PC-3 (cell line): ENCODE measurements at regions of chr1 and their contacts with region 1.

Region 1: DNA sequence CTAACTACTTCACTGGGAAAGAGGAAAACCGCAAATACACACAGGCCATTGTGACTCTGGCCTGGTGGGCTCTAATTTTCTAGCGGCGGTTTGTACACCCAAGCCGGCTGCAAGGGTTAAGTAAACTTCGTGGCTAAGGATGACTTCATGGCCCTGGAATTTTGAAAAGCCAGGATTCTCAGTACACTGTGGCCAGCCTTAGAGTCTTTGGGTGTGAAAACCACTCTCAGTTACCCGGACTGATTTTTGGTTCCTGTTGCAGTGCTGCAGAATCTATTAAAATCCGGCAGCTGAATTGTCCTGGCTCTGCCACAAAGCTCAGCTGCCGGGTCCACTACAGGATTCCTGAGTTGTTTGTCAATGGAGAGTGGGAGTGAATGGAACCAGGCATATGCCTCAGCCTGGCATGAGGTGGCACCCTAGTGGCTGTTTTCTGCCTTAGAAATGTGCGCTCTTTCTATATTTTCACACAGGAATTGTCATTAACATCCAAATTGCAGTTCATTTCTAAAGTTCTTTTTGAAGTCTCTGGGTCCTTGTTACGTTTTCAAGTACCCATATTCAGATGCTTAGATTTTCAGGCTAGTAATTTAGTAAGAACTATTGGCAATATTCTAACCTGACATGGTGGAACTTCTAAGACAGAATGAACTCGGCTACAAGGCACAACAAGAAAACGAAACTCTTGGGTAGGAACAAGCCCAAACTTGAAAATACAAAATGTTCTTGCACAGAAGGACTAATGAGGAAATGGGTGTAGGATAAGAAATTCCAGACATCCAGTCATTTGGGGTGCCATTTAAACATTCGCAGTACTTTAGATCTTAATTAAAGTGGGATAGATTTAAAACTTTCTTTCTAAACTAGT is 255.9 kb downstream of the NFIA start:
- DNase-seq: peak; percentile 96
- ATAC-seq: peak; percentile 96
- H3K4me3 ChIP-seq: peak overlapping the region; percentile 66
- H3K27ac ChIP-seq: peak overlapping the region; percentile 67
- H3K4me1 ChIP-seq: peaks cover 27% of the 10 kb centered on the region
- H3K27me3 ChIP-seq: no peaks in the 10 kb centered on the region
- CTCF ChIP-seq: peak; percentile 93

Region 2: DNA sequence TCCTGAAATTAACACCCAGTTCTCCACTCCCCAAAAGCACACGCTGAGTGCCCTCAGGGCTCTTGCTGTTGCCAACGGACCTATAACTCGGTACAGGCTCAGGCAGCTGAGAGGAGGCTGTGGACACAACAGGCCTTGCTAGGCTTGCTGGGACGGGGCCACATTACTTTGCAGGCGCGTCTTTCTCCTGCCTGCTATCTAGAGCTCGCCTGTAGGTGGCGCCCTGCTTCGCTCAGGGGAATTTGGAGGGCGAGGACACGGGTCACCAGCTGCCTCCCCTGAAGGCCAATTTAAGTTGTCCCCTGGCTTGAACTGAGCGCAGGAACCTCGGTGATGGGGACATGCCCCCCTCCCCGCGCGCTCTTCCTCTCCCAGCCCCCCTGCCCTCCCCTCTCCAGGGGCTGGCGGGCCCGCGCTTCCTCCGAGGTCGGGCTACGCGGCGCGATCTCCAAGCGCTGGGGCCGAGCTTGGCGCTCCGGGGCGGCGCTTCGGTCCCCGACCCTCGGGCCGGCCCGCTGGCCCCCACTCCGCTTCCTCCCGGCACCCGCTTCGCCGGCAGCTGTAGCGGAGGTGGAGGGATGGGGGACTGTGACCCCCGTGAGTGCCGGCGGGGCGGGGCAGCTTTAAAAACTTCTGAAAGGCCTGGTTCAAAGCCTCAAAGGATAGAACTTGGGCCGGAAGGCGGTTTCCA is 288.2 kb before region 1 on chr1:
- CTCF ChIA-PET with region 1: interaction called, 9 read pairs
- POLR2A ChIA-PET with region 1: interaction called, 3 read pairs
- intact Hi-C with region 1: loop called (anchors 1 kb)
- DNase-seq: peak; percentile 94
- ATAC-seq: peak; percentile 84
- H3K4me3 ChIP-seq: peak overlapping the region; percentile 87
- H3K27ac ChIP-seq: no peak overlapping the region
- H3K4me1 ChIP-seq: peaks cover 4% of the 10 kb centered on the region; the same call in 1 of the 2 replicates
- H3K27me3 ChIP-seq: no peaks in the 10 kb centered on the region
- CTCF ChIP-seq: peak; percentile 91

Region 3: DNA sequence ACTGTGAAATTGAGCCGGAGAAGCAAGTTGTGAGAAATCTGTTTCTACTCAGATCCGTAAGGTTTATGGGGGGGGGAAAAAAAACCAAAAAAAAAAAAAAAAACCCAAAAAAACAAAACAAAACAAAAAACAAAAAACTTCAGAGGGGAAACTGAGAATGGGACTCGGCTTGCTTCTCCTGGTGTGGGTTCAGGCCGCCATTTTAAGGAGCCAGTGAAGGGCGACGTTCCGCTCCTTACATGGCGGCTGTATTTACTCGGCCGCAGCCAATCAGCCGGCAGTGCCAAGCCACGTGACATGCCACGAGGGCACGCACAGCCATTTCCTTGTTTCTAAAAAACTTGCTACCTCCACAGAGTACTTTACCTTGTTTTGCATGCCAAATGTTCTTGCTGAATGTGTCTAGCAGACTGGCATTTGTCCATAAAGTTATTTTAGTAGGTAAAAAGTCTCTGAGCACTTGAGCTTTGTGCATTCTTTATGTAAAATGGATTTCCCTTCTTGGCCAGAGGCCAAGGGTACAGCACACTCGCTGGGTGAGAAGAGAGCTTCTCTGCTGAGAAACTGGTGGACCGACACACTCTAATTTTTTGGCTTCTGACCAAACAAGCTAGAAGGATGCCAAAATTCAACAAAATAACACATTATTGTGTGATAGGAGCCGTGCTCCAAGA is 154.0 kb before region 1 on chr1:
- CTCF ChIA-PET with region 1: no interaction called
- POLR2A ChIA-PET with region 1: interaction called, 13 read pairs
- intact Hi-C with region 1: no loop called
- DNase-seq: peak; percentile 56
- ATAC-seq: no peak
- H3K4me3 ChIP-seq: no peak overlapping the region
- H3K27ac ChIP-seq: no peak overlapping the region
- H3K4me1 ChIP-seq: peaks cover 11% of the 10 kb centered on the region
- H3K27me3 ChIP-seq: no peaks in the 10 kb centered on the region
- CTCF ChIP-seq: no peak

Region 4: GRCh38 chr1:61293986-61294504 is 44.2 kb before region 1 on chr1:
- CTCF ChIA-PET with region 1: no interaction called
- POLR2A ChIA-PET with region 1: no interaction called
- intact Hi-C with region 1: loop called (anchors 1 kb)
- DNase-seq: peak; percentile 80
- ATAC-seq: peak; percentile 83
- H3K4me3 ChIP-seq: no peak overlapping the region
- H3K27ac ChIP-seq: peak overlapping the region; percentile 80
- H3K4me1 ChIP-seq: peaks cover 42% of the 10 kb centered on the region
- H3K27me3 ChIP-seq: no peaks in the 10 kb centered on the region
- CTCF ChIP-seq: no peak

Region 5: GRCh38 chr1:61588736-61589672 is 250.8 kb after region 1 on chr1:
- CTCF ChIA-PET with region 1: interaction called, 6 read pairs
- POLR2A ChIA-PET with region 1: no interaction called
- intact Hi-C with region 1: loop called (anchors 1 kb)
- DNase-seq: peak; percentile 88
- ATAC-seq: peak; percentile 98
- H3K4me3 ChIP-seq: no peak overlapping the region
- H3K27ac ChIP-seq: no peak overlapping the region
- H3K4me1 ChIP-seq: peaks cover 12% of the 10 kb centered on the region; the same call in 1 of the 2 replicates
- H3K27me3 ChIP-seq: no peaks in the 10 kb centered on the region
- CTCF ChIP-seq: peak; percentile 96

Region 6: DNA sequence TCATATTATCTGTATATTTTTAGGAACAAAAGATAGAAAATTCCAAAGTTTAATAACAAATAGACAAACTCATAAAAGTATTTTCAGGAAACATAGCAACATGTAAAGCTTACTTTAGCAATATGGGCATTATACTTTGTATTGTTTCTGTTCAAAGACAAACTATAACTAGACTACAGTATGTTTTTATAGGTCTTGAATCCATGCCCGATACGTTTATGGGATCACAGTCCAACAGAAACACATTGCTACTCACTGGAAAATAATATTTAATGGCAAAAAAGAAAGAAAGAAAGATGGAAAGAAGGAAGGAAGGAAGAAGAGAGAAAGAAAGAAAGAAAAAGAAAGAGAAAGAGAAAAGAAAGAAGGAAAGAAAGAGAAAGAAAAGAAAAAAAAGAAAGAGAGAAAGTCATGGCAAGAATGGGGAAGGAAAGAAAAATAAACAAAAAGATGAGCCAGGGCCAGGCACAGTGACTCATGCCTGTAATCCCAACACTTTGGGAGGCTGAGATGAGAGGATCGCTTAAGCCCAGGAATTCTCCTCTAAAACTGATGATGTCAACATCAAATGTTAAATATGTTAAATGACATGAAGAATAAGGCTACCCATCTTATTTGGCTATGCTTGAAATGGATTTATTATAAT is 354.1 kb after region 1 on chr1:
- CTCF ChIA-PET with region 1: no interaction called
- POLR2A ChIA-PET with region 1: no interaction called
- intact Hi-C with region 1: no loop called
- DNase-seq: peak; percentile 55
- ATAC-seq: peak; percentile 85
- H3K4me3 ChIP-seq: peak overlapping the region; percentile 51
- H3K27ac ChIP-seq: peak overlapping the region; percentile 35; the same call in 1 of the 2 replicates
- H3K4me1 ChIP-seq: peaks cover 10% of the 10 kb centered on the region
- H3K27me3 ChIP-seq: no peaks in the 10 kb centered on the region
- CTCF ChIP-seq: no peak